CD4-positive, alpha-beta memory T cell (primary cell): ENCODE measurements at regions of chr3 and their contacts with region 1.

Region 1: DNA sequence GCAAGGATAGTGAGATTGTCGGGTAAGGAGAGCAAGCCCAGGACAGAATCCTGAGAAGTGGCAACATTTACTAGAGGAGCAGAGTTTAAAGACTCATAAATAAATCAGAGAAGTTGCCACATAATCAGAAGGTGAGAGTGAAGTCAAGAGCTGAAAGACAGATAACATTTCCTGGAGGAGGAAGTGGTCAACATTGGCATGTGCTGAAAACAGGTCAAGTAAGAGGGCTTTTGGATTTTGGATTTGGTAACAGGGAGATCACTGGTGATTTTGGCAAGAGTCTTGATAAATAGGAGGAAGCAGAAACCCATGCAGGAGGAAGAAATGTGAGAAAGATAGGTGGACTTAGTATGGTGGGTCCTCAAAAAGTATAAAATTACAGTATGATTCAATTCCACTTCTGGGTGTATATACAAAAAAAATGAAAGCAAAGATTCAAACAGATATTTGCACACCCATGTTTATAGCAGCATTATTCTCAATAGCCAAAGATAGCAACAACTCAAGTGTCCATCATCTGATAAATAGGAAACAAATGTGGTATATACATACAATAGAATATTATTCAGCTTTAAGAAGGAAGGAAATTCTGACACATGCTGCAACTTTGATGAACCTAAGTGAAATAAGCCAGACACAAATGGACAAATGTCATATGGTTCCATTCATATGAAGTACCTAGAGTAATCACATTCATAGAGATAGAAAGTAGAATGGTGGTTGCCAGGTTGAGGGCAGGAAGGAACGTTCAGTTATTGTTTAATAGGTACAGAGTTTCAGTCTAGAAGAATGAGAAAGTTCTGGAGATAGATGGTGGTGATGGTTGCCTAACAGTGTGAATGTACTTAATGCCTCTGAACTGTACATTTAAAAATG is 27.3 kb upstream of the MBNL1 start:
- DNase-seq: no peak
- H3K4me3 ChIP-seq: peak overlapping the region in 1 of 2 donors; percentile 17
- H3K4me3 Mint-ChIP-seq: peak overlapping the region; percentile 69 to 97 (median 78)
- H3K27ac ChIP-seq: peak overlapping the region; percentile 69
- H3K27ac Mint-ChIP-seq: peak overlapping the region; percentile 82 to 97 (median 92)
- H3K4me1 ChIP-seq: peaks cover 56% of the 10 kb centered on the region
- H3K4me1 Mint-ChIP-seq: peaks cover 46 to 81% (median 52%) of the 10 kb centered on the region in 4 donors
- H3K27me3 ChIP-seq: no peaks in the 10 kb centered on the region
- H3K27me3 Mint-ChIP-seq: no peaks in the 10 kb centered on the region

Region 2: DNA sequence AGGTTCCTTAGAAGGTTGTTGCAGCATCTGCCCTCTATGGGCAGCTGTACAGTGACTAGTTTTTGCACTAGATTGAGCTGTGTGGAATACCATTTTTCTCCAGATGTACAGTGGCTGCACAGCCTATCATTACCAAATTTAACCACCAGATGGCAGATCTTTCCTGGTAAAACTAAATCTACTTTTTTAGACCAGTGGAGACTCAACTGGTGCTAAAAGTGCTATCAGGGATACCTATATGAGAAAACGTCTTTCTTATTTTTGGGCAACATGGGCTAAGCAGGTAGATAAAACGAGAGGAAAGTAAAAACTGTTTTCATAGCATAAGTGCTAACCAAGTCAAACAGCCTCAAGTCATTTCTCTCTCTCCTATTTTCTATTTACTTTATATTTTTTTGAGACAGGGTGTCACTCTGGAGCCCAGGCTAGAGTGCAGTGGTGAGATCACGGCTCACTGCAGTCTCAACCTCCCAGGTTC is 801.7 kb before region 1 on chr3:
- CTCF ChIA-PET with region 1: no interaction called
- POLR2A ChIA-PET with region 1: no interaction called
- intact Hi-C with region 1: no loop called
- DNase-seq: peak in 4 of 5 donors; percentile 17 to 30 (median 22)
- H3K4me3 ChIP-seq: no peak overlapping the region
- H3K4me3 Mint-ChIP-seq: no peak overlapping the region
- H3K27ac ChIP-seq: no peak overlapping the region
- H3K27ac Mint-ChIP-seq: no peak overlapping the region
- H3K4me1 ChIP-seq: no peaks in the 10 kb centered on the region
- H3K4me1 Mint-ChIP-seq: no peaks in the 10 kb centered on the region
- H3K27me3 ChIP-seq: no peaks in the 10 kb centered on the region
- H3K27me3 Mint-ChIP-seq: peaks cover 0 to 2% of the 10 kb centered on the region in 2 donors

Region 3: GRCh38 chr3:152199102-152199840 is 42.1 kb before region 1 on chr3:
- CTCF ChIA-PET with region 1: interaction called, 16 read pairs
- POLR2A ChIA-PET with region 1: interaction called, 193 read pairs
- intact Hi-C with region 1: loop called (anchors 1 kb)
- DNase-seq: peak in 1 of 5 donors; percentile 33
- H3K4me3 ChIP-seq: peak overlapping the region; percentile 35 to 55
- H3K4me3 Mint-ChIP-seq: peak overlapping the region; percentile 74 to 93 (median 80)
- H3K27ac ChIP-seq: peak overlapping the region; percentile 84
- H3K27ac Mint-ChIP-seq: peak overlapping the region; percentile 90 to 99 (median 94)
- H3K4me1 ChIP-seq: peaks cover 85% of the 10 kb centered on the region
- H3K4me1 Mint-ChIP-seq: peaks cover 47 to 79% (median 64%) of the 10 kb centered on the region in 4 donors
- H3K27me3 ChIP-seq: no peaks in the 10 kb centered on the region
- H3K27me3 Mint-ChIP-seq: no peaks in the 10 kb centered on the region

Region 4: DNA sequence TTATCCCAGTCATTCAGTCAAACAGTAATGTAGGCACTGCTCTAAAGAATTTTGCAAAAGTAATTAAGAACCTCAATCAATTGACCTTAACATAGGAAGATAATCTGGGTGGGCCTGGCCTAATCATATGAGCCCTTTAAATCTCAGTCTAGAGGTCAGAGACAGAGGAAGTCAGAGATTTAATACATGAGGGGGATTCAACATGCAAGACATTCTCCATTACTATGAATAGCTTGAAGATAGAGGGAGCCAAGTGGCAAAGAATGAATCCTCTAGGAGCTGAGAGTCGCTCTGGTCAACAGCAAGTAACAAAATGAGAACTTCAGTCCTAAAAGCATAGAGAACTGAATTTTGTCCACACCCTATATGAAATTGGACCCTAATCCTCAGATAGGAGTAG is 11.7 kb before region 1 on chr3:
- CTCF ChIA-PET with region 1: interaction called, 4 read pairs
- POLR2A ChIA-PET with region 1: interaction called, 28 read pairs
- intact Hi-C with region 1: loop called (anchors 1 kb)
- DNase-seq: no peak
- H3K4me3 ChIP-seq: no peak overlapping the region
- H3K4me3 Mint-ChIP-seq: peak overlapping the region in 2 of 8 donors; percentile 1 to 13
- H3K27ac ChIP-seq: no peak overlapping the region
- H3K27ac Mint-ChIP-seq: peak overlapping the region in 1 of 7 donors; percentile 1
- H3K4me1 ChIP-seq: peaks cover 42% of the 10 kb centered on the region
- H3K4me1 Mint-ChIP-seq: peaks cover 34 to 56% (median 44%) of the 10 kb centered on the region in 4 donors
- H3K27me3 ChIP-seq: no peaks in the 10 kb centered on the region
- H3K27me3 Mint-ChIP-seq: no peaks in the 10 kb centered on the region

Region 5: GRCh38 chr3:152281133-152281713 is 39.8 kb after region 1 on chr3:
- CTCF ChIA-PET with region 1: no interaction called
- POLR2A ChIA-PET with region 1: interaction called, 414 read pairs
- intact Hi-C with region 1: no loop called
- DNase-seq: no peak
- H3K4me3 ChIP-seq: no peak overlapping the region
- H3K4me3 Mint-ChIP-seq: peak overlapping the region; percentile 15 to 87 (median 70)
- H3K27ac ChIP-seq: peak overlapping the region; percentile 61
- H3K27ac Mint-ChIP-seq: peak overlapping the region; percentile 62 to 88 (median 76)
- H3K4me1 ChIP-seq: peaks cover 97% of the 10 kb centered on the region
- H3K4me1 Mint-ChIP-seq: peaks cover 61 to 85% (median 72%) of the 10 kb centered on the region in 4 donors
- H3K27me3 ChIP-seq: no peaks in the 10 kb centered on the region
- H3K27me3 Mint-ChIP-seq: no peaks in the 10 kb centered on the region

Region 6: DNA sequence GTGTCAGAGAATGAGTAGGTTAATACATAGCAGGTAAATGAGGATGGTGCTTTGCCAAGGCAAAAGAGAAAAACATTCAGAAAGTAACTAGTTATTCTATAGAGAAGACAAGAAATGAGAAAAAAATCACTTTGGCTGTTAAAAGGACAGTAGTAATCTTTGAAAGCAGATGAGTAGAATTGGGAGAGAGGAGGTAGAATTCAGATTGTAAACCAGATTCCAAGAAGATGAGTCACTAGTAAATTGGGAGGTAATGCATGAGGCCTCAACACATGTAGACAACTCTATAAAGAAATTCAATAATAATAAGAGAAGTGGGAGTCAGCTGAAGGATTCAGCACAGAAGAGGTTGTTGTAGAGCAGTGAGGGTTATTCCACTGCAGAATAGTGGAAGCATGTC is 108.8 kb after region 1 on chr3:
- CTCF ChIA-PET with region 1: no interaction called
- POLR2A ChIA-PET with region 1: no interaction called
- intact Hi-C with region 1: no loop called
- DNase-seq: no peak
- H3K4me3 ChIP-seq: no peak overlapping the region
- H3K4me3 Mint-ChIP-seq: no peak overlapping the region
- H3K27ac ChIP-seq: no peak overlapping the region
- H3K27ac Mint-ChIP-seq: no peak overlapping the region
- H3K4me1 ChIP-seq: peaks cover 89% of the 10 kb centered on the region
- H3K4me1 Mint-ChIP-seq: peaks cover 34 to 43% (median 37%) of the 10 kb centered on the region in 4 donors
- H3K27me3 ChIP-seq: no peaks in the 10 kb centered on the region
- H3K27me3 Mint-ChIP-seq: no peaks in the 10 kb centered on the region

Region 7: DNA sequence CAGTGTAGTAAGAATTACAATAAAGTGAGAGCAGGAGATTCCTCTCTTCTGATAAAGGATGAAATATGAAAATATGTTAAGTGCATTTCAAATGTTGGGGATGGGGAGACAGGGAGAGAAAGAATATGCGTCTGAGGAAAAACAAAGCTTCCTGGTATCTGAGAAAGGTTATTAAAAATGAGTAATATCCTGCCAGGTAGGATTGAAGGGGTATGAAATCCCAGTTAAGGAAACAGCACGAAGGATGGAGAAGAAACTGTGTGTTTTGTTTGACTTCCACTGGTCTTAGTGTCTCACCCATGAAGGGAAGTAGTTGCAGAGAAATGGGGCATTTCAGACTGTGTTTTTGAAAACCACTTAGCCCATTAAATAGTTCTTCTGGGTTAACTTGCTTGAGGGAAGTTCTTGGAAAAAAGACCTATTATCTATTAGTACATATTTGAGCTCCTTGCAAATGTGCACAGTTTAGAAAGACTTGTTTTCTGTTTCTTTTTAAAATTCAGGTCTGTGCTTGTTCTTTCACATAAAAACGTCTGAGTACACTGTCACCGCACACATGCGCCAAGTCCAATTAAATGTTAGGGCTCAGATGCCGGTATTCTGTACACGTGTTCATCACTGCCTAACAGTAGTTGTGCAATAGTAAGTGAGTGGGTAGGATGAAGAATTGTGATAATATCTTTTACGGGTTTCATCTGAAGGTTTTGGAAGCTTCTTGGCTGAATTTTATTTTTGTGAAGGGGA is 397.5 kb after region 1 on chr3:
- CTCF ChIA-PET with region 1: no interaction called
- POLR2A ChIA-PET with region 1: no interaction called
- intact Hi-C with region 1: no loop called
- DNase-seq: no peak
- H3K4me3 ChIP-seq: no peak overlapping the region
- H3K4me3 Mint-ChIP-seq: no peak overlapping the region
- H3K27ac ChIP-seq: no peak overlapping the region
- H3K27ac Mint-ChIP-seq: no peak overlapping the region
- H3K4me1 ChIP-seq: no peaks in the 10 kb centered on the region
- H3K4me1 Mint-ChIP-seq: no peaks in the 10 kb centered on the region
- H3K27me3 ChIP-seq: no peaks in the 10 kb centered on the region
- H3K27me3 Mint-ChIP-seq: peaks cover 1 to 15% of the 10 kb centered on the region in 2 donors